Activated naive CD4-positive, alpha-beta T cell treated with anti-CD3 and anti-CD28 coated beads for 36 hours (primary cell): ENCODE measurements at regions of chr16 and their contacts with region 1.

Region 1: DNA sequence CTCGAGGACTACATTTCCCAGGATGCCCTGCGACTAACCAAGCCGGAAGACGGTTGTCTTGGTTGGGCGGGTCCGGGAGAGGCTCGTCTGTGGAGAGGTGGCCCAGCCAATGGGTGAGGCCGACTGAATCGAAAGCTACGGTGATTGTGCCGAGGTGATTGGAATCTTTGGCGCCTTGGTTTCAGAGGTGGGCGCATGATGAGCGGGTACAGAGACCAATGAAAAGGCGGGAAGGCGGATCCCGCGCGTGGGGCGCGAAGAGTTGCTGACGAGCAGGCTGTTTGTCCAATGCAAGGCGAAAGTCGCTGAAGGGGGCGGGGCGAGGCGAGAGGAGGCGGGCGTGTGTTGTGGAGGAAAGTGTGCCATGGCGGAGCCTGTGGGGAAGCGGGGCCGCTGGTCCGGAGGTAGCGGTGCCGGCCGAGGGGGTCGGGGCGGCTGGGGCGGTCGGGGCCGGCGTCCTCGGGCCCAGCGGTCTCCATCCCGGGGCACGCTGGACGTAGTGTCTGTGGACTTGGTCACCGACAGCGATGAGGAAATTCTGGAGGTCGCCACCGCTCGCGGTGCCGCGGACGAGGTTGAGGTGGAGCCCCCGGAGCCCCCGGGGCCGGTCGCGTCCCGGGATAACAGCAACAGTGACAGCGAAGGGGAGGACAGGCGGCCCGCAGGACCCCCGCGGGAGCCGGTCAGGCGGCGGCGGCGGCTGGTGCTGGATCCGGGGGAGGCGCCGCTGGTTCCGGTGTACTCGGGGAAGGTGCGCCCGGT is at the start of gene NFATC2IP:
- DNase-seq: peak; percentile 100
- H3K4me3 Mint-ChIP-seq: peak within 1 kb of the TSS; percentile 94
- H3K27ac Mint-ChIP-seq: peak within 1 kb of the TSS; percentile 93
- H3K4me1 Mint-ChIP-seq: peaks cover 32% of the 10 kb centered on the region
- H3K27me3 Mint-ChIP-seq: no peaks in the 10 kb centered on the region
- total RNA-seq, gene NFATC2IP: 55.5 to 58.9 TPM

Region 2: DNA sequence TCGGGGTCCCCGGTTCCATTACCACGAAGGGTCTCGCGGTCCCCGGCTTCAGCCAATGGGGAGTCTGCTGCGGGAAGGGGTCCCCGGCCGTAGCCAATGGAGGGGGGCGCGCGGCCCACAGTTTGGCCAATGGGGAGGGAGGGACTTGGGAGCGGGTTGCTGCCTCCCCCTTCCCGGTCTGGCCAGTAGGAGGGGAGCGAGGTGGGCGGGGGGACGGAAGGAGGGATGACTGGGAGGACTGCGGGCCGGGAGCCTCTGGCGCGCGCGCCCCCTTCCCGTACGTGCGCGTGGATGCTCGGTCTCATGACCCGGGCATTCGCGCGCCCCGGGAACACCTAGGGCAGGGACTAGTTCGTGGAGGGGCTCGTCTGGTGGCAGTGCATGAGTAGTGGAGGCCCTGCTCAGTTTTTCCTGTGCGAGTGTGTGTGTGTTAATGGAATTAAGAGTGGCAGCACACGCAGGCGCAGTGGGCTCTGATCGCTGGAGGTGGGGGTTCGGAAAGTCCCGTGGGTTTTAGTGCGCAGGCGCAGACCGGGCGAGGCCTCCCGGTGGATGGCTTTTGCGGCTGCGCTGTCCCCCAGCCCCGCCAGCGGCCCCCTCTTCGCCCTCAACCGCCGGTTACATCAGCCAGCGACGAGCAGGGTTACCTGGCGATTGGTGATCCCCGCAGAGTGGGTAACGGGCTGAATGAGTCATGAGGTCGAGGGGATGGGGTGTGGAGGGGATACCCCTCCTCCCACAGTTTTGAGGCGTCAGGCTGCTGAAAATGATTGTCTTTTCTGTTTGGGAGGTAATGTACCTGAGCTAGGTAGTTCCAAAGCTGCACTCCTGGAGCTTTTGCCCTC is 126.7 kb before region 1 on chr16:
- CTCF ChIA-PET with region 1: interaction called, 3 read pairs
- intact Hi-C with region 1: loop called (anchors 1 kb)
- DNase-seq: peak; percentile 99
- H3K4me3 Mint-ChIP-seq: peak overlapping the region; percentile 92
- H3K27ac Mint-ChIP-seq: peak overlapping the region; percentile 98
- H3K4me1 Mint-ChIP-seq: peaks cover 50% of the 10 kb centered on the region
- H3K27me3 Mint-ChIP-seq: no peaks in the 10 kb centered on the region

Region 3: GRCh38 chr16:28879841-28880588 is 70.8 kb before region 1 on chr16:
- CTCF ChIA-PET with region 1: interaction called, 26 read pairs
- intact Hi-C with region 1: loop called (anchors 1 kb)
- DNase-seq: peak; percentile 95
- H3K4me3 Mint-ChIP-seq: peak overlapping the region; percentile 90
- H3K27ac Mint-ChIP-seq: peak overlapping the region; percentile 24
- H3K4me1 Mint-ChIP-seq: peaks cover 20% of the 10 kb centered on the region
- H3K27me3 Mint-ChIP-seq: peaks cover 13% of the 10 kb centered on the region

Region 4: DNA sequence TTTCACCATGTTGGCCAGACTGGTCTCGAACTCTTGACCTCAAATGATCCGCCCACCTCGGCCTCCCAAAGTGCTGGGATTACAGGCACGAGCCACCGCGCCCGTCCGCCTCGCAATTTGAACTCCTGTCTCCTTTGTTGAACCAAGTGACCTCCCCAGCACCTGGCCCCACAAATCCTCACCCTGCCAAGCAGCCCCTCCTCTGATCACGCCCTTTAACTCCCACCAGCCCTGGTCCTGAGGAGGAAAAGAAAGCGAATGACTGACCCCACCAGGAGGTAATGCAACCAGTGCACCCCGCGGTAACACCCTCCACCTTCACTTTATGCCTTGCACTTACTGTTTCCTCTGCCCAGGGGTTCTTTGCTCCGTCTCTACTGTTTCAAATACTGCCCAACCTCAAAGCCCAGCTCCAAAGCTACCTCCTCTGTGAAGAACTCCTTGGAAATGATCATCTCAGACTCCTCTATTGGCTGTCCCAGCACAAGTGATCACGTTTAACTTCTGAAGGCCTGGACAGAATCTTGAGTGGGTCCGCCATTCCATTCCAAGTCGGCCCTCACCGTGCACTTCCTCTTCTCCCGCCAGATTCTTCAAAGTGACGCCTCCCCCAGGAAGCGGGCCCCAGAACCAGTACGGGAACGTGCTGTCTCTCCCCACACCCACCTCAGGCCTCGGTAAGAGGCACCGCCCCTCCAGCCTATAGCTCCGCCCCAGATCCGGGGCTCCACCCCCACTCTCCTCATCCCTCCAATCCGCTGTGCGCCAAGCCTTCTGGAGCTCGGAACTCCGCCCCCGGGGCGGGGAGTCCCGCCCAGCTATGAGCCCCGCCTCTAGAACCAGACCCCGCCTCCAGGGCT is 14.7 kb before region 1 on chr16:
- CTCF ChIA-PET with region 1: interaction called, 10 read pairs
- intact Hi-C with region 1: no loop called
- DNase-seq: peak; percentile 85
- H3K4me3 Mint-ChIP-seq: peak overlapping the region; percentile 66
- H3K27ac Mint-ChIP-seq: peak overlapping the region; percentile 52
- H3K4me1 Mint-ChIP-seq: peaks cover 16% of the 10 kb centered on the region
- H3K27me3 Mint-ChIP-seq: no peaks in the 10 kb centered on the region

Region 5: GRCh38 chr16:28984619-28985135 is 33.8 kb after region 1 on chr16 and contains the start of gene LAT:
- CTCF ChIA-PET with region 1: no interaction called
- intact Hi-C with region 1: loop called (anchors 1 kb)
- DNase-seq: peak; percentile 84
- H3K4me3 Mint-ChIP-seq: peak within 1 kb of the TSS; percentile 100
- H3K27ac Mint-ChIP-seq: peak within 1 kb of the TSS; percentile 99
- H3K4me1 Mint-ChIP-seq: peaks cover 44% of the 10 kb centered on the region
- H3K27me3 Mint-ChIP-seq: no peaks in the 10 kb centered on the region
- total RNA-seq, gene LAT: 122 to 128 TPM

Region 6: DNA sequence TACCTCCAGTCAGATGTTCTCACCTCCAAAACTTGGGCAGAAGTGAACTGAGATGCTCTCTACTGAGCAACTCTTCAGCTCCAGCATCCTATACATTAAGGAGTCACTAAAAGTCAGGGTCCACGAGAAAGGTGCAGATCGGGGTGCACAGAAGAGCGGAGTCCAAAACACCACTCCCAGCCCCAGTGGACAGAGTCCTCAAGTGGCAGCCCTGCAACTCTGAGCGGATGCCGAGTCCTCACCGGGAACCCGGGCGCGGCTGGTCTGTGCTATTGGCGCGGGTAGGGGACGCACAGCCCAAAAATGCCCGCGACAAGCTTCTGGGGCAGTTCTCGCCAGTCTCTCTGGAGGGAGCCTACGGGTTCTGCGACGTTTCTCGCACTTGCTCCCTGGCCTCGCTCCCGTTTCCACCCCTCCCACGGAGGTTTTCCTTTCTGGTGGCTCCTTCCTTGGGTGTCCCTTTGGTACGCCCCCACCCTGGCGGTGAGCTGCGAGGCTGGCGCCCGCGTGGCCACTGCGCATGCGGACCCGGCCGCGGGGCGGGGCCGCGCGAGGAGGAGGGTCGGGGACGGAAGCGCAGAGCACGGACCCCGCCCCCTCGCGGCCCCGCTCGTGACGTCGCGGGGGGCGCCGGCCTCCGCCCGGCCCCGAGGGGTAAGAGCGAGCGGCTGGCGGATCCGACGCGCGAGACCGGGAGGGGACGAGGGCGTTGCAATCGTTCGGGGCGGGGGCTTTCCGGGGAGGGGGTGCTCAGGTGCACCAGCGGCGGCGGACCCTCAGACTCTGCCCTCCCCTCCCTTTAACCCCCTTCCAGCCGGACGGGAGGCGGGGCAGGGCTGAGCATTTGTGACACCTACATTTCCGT is 1010.9 kb after region 1 on chr16 and contains the start of gene TMEM219:
- CTCF ChIA-PET with region 1: no interaction called
- intact Hi-C with region 1: loop called (anchors 10 kb)
- DNase-seq: peak; percentile 88
- H3K4me3 Mint-ChIP-seq: peak within 1 kb of the TSS; percentile 87
- H3K27ac Mint-ChIP-seq: peak within 1 kb of the TSS; percentile 83
- H3K4me1 Mint-ChIP-seq: peaks cover 20% of the 10 kb centered on the region
- H3K27me3 Mint-ChIP-seq: no peaks in the 10 kb centered on the region
- total RNA-seq, gene TMEM219: 31.9 to 35.5 TPM